ENCODE measurements at regions of chrX and their contacts with region 1.

Region 1: GRCh38 chrX:48589482-48590162 is 7.7 kb upstream of the WDR13 start:
- DNase-seq: no peak
- H3K4me3 ChIP-seq: no peak overlapping the region
- H3K27ac ChIP-seq: peak overlapping the region; percentile 7
- H3K4me1 ChIP-seq: peaks cover 25% of the 10 kb centered on the region
- H3K27me3 ChIP-seq: no peaks in the 10 kb centered on the region
- CTCF ChIP-seq: no peak
- POLR2A ChIP-seq: no peak

Region 2: GRCh38 chrX:48475774-48476577 is 113.6 kb before region 1 on chrX and contains the start of gene FTSJ1:
- CTCF ChIA-PET with region 1: no interaction called
- POLR2A ChIA-PET with region 1: no interaction called
- dilution Hi-C with region 1: no loop called
- intact Hi-C with region 1: loop called (anchors 1 kb)
- DNase-seq: peak; percentile 92
- H3K4me3 ChIP-seq: peak within 1 kb of the TSS; percentile 76 to 91 (median 88)
- H3K27ac ChIP-seq: peak within 1 kb of the TSS; percentile 56
- H3K4me1 ChIP-seq: peaks cover 6% of the 10 kb centered on the region
- H3K27me3 ChIP-seq: no peaks in the 10 kb centered on the region
- CTCF ChIP-seq: no peak
- POLR2A ChIP-seq: peak; percentile 68
- total RNA-seq, gene FTSJ1: 52.9 and 59.9 TPM in 2 replicates

Region 3: GRCh38 chrX:48521353-48522243 is 68.0 kb before region 1 on chrX and contains the start of gene EBP:
- CTCF ChIA-PET with region 1: no interaction called
- POLR2A ChIA-PET with region 1: no interaction called
- dilution Hi-C with region 1: no loop called
- intact Hi-C with region 1: loop called (anchors 5 kb)
- DNase-seq: peak; percentile 83
- H3K4me3 ChIP-seq: peak within 1 kb of the TSS; percentile 45 to 69 (median 65)
- H3K27ac ChIP-seq: peak within 1 kb of the TSS; percentile 10
- H3K4me1 ChIP-seq: peaks cover 2% of the 10 kb centered on the region
- H3K27me3 ChIP-seq: no peaks in the 10 kb centered on the region
- CTCF ChIP-seq: no peak
- POLR2A ChIP-seq: peak; percentile 71
- total RNA-seq, gene EBP: 102 and 114 TPM in 2 replicates

Region 4: GRCh38 chrX:48539345-48540027 is 50.1 kb before region 1 on chrX and contains the start of gene TBC1D25:
- CTCF ChIA-PET with region 1: interaction called, 3 read pairs
- POLR2A ChIA-PET with region 1: interaction called, 3 read pairs
- dilution Hi-C with region 1: no loop called
- intact Hi-C with region 1: loop called (anchors 1 kb)
- DNase-seq: peak; percentile 97
- H3K4me3 ChIP-seq: peak within 1 kb of the TSS; percentile 52 to 88 (median 61)
- H3K27ac ChIP-seq: peak within 1 kb of the TSS; percentile 71
- H3K4me1 ChIP-seq: peaks cover 7% of the 10 kb centered on the region
- H3K27me3 ChIP-seq: no peaks in the 10 kb centered on the region
- CTCF ChIP-seq: peak; percentile 23 to 44
- POLR2A ChIP-seq: no peak
- total RNA-seq, gene TBC1D25: 14.4 and 16.3 TPM in 2 replicates

Region 5: DNA sequence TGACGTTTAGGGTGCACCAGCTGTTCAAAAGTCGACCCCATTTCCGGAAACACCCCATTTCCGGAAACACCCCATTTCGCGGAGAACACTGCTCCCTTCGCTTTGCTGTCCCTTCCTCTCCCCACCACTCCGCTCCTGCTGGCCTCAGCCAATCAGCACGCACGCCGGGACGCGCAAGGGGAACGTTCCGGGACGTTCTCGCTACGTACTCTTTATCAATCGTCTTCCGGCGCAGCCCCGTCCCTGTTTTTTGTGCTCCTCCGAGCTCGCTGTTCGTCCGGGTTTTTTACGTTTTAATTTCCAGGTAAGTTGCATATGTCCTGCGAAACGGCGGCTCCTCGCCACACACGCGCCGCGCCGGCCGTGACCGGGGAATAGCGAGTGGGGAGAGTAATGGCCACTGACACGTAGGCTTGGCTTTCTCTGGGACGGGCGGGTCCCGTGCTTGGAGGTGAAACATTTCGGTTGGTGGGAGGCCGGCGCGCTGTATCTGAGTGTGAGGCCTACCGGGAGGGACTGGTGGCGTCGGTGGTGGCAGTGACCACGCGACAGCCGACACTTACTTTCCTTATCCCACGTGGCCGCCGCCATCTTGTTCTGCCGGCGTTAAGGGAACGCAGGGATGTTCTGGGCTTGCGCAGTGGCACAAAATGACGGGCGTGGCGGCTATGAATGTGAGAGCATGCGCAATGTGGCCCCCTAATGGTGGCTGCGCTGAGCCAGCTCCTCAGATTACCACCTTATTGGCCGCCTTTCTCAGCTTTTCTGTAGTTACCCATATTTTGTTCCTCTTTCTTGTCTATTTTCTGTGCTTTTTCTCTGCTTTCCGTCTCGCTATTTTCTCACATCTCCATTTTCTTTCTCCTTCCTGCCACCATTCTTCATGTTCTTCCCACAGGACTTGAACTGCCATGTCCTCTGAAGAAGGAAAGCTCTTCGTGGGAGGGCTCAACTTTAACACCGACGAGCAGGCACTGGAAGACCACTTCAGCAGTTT is 15.1 kb before region 1 on chrX and contains the start of gene RBM3:
- CTCF ChIA-PET with region 1: interaction called, 3 read pairs
- POLR2A ChIA-PET with region 1: interaction called, 8 read pairs
- dilution Hi-C with region 1: no loop called
- intact Hi-C with region 1: loop called (anchors 1 kb)
- DNase-seq: peak; percentile 90
- H3K4me3 ChIP-seq: peak within 1 kb of the TSS; percentile 60 to 96 (median 75)
- H3K27ac ChIP-seq: peak within 1 kb of the TSS; percentile 95
- H3K4me1 ChIP-seq: peaks cover 26% of the 10 kb centered on the region
- H3K27me3 ChIP-seq: no peaks in the 10 kb centered on the region
- CTCF ChIP-seq: peak in 1 of 2 donors; percentile 48
- POLR2A ChIP-seq: peak; percentile 80
- total RNA-seq, gene RBM3: 477 and 485 TPM in 2 replicates

Region 6: GRCh38 chrX:49309401-49309981 is 719.9 kb after region 1 on chrX:
- CTCF ChIA-PET with region 1: no interaction called
- POLR2A ChIA-PET with region 1: no interaction called
- dilution Hi-C with region 1: no loop called
- intact Hi-C with region 1: no loop called
- DNase-seq: peak; percentile 10
- H3K4me3 ChIP-seq: peak overlapping the region in 2 of 3 experiments; percentile 5 to 36
- H3K27ac ChIP-seq: no peak overlapping the region
- H3K4me1 ChIP-seq: no peaks in the 10 kb centered on the region
- H3K27me3 ChIP-seq: no peaks in the 10 kb centered on the region
- CTCF ChIP-seq: no peak
- POLR2A ChIP-seq: no peak